Activated CD8-positive, alpha-beta T cell treated with anti-CD3 and anti-CD28 coated beads for 36 hours (primary cell): ENCODE measurements at regions of chr2 and their contacts with region 1.

Region 1: GRCh38 chr2:85813982-85814801 is 60.4 kb downstream of the ATOH8 start:
- DNase-seq: peak; percentile 91
- ATAC-seq: peak; percentile 98
- H3K4me3 Mint-ChIP-seq: no peak overlapping the region
- H3K27ac Mint-ChIP-seq: no peak overlapping the region
- H3K4me1 Mint-ChIP-seq: no peaks in the 10 kb centered on the region
- H3K27me3 Mint-ChIP-seq: peaks cover 9% of the 10 kb centered on the region
- CTCF ChIP-seq: peak; percentile 89

Region 2: DNA sequence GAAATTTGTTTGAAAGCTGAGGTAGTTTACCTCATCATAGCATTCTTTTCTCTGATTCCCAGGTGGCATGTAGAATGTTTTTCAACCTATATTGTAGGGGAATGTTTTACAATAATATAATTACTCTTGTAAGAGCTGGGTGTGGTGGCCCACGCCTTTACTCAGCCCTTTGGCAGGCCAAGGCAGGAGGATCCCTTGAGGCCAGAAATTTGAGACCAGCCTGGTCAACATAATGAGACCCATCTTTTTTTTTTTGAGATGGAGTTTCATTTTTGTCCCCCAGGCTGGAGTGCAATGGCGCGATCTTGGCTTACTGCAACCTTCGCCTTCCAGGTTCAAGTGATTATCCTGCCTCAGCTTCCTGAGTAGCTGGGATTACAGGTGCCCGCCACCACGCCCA is 194.6 kb before region 1 on chr2:
- CTCF ChIA-PET with region 1: no interaction called
- POLR2A ChIA-PET with region 1: no interaction called
- intact Hi-C with region 1: no loop called
- DNase-seq: no peak
- ATAC-seq: no peak
- H3K4me3 Mint-ChIP-seq: no peak overlapping the region
- H3K27ac Mint-ChIP-seq: no peak overlapping the region
- H3K4me1 Mint-ChIP-seq: peaks cover 28% of the 10 kb centered on the region
- H3K27me3 Mint-ChIP-seq: no peaks in the 10 kb centered on the region
- CTCF ChIP-seq: no peak

Region 3: GRCh38 chr2:85712849-85713602 is 101.2 kb before region 1 on chr2:
- CTCF ChIA-PET with region 1: interaction called, 29 read pairs
- POLR2A ChIA-PET with region 1: no interaction called
- intact Hi-C with region 1: no loop called
- DNase-seq: no peak
- ATAC-seq: no peak
- H3K4me3 Mint-ChIP-seq: no peak overlapping the region
- H3K27ac Mint-ChIP-seq: no peak overlapping the region
- H3K4me1 Mint-ChIP-seq: peaks cover 4% of the 10 kb centered on the region
- H3K27me3 Mint-ChIP-seq: peaks cover 1% of the 10 kb centered on the region
- CTCF ChIP-seq: no peak

Region 4: DNA sequence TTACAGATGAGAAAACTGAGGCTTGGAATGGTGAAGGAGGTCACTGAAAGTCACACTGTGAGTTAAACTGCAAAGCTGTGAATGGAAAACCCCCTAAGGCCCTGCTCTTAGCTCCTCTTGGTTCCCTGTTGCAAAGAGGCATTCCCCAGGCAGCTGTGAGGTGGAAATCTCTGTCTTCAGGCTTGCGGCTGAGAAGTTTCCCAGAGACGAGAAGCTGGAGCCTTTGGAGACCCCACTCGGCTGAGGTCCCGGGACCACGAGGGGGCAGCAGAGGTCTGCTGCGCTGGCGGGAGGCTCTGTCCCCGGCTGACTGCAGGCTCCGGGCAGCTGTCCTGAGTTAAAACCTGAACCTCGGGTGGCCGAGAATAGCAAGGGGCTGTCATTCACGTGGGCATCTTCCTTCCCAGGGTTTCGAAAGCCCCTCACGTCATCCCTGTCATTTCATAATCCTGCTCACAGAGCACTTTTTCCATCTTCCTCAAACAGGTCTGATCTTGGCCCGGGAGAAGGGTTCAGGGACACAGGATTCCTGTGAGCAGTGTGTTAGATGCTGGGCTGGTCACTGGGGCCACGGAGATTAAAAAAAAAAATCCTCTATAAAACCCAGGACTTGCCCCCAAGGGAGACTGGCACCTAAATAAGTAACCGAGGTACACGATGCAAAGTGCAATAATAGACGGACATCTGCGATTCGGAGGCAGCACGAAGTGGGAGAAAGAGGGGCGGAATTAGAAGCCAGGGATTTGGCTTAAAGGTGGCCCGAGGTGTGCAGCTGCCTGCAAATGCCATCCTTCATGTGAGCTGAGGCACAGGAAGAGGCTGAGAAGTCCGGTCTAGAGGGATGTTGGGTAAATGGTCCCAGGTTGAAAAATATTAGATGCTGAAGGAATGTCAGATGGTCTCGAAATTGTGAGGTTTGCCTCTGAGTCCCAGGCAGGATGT is 85.0 kb before region 1 on chr2:
- CTCF ChIA-PET with region 1: interaction called, 117 read pairs
- POLR2A ChIA-PET with region 1: interaction called, 4 read pairs
- intact Hi-C with region 1: loop called (anchors 5 kb)
- DNase-seq: peak; percentile 82
- ATAC-seq: peak; percentile 96
- H3K4me3 Mint-ChIP-seq: no peak overlapping the region
- H3K27ac Mint-ChIP-seq: no peak overlapping the region
- H3K4me1 Mint-ChIP-seq: no peaks in the 10 kb centered on the region
- H3K27me3 Mint-ChIP-seq: peaks cover 7% of the 10 kb centered on the region
- CTCF ChIP-seq: peak; percentile 87

Region 5: GRCh38 chr2:85750587-85751575 is 63.3 kb before region 1 on chr2:
- CTCF ChIA-PET with region 1: interaction called, 76 read pairs
- POLR2A ChIA-PET with region 1: interaction called, 3 read pairs
- intact Hi-C with region 1: loop called (anchors 1 kb)
- DNase-seq: peak; percentile 79
- ATAC-seq: peak; percentile 61
- H3K4me3 Mint-ChIP-seq: no peak overlapping the region
- H3K27ac Mint-ChIP-seq: no peak overlapping the region
- H3K4me1 Mint-ChIP-seq: peaks cover 16% of the 10 kb centered on the region
- H3K27me3 Mint-ChIP-seq: peaks cover 39% of the 10 kb centered on the region
- CTCF ChIP-seq: peak; percentile 75

Region 6: GRCh38 chr2:86097114-86097896 is 283.1 kb after region 1 on chr2:
- CTCF ChIA-PET with region 1: no interaction called
- POLR2A ChIA-PET with region 1: no interaction called
- intact Hi-C with region 1: no loop called
- DNase-seq: no peak
- ATAC-seq: no peak
- H3K4me3 Mint-ChIP-seq: no peak overlapping the region
- H3K27ac Mint-ChIP-seq: no peak overlapping the region
- H3K4me1 Mint-ChIP-seq: peaks cover 30% of the 10 kb centered on the region
- H3K27me3 Mint-ChIP-seq: no peaks in the 10 kb centered on the region
- CTCF ChIP-seq: no peak